ENCODE measurements at regions of chr1 and their contacts with region 1.

Region 1: DNA sequence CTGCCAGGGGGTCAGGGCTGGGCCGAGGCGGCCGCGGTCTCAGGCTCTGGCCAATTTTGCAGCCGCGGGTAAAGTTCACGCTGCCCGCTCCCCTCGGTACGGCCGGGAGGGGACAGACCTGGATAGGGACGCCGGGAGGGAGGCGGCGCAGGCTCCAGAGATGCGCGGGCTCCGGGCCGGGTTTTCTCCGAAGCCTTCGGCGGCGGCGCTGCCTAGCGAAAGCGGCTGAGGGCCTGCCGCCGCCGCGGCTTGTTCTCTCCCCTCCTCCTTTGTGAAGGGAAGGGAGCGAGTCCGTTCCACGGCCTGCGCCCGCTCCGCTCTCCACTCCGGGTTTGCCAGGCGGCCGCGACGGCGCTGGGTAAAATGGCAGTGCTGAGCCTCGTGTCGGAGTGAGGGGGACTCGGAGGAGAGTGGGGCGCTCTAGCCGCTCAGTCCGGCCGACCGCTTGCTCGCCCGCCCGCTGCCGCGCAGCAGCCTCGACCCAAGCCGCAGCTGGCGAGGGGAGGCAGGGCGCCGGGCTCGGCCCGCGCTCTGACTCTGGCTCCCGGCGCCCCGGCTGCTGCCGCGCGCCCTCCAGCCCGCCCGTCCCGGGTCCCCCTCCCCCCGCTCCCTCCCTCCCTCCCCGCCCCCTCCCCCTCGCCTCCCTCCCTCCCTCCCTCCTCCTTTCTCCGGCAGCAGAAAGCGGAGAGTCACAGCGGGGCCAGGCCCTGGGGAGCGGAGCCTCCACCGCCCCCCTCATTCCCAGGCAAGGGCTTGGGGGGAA is at the start of gene ARID1A:
- DNase-seq: peak; percentile 83 to 98 (median 88)
- ATAC-seq: peak; percentile 74
- H3K4me3 ChIP-seq: peak within 1 kb of the TSS; percentile 79
- H3K27ac ChIP-seq: peak within 1 kb of the TSS; percentile 92
- H3K4me1 ChIP-seq: peaks cover 43 to 47% of the 10 kb centered on the region in 2 experiments
- H3K27me3 ChIP-seq: no peaks in the 10 kb centered on the region
- CTCF ChIP-seq: peak in 1 of 3 experiments; percentile 14; a peak in 1 of 6 replicates
- EP300 ChIP-seq: peak; percentile 80
- POLR2A ChIP-seq: peak; percentile 90
- RAD21 ChIP-seq: peak; percentile 62 to 68
- polyA plus RNA-seq, gene ARID1A: 8.3 to 20.2 TPM

Region 2: GRCh38 chr1:26440259-26440658 is 255.3 kb before region 1 on chr1:
- CTCF ChIA-PET with region 1: no interaction called
- POLR2A ChIA-PET with region 1: no interaction called
- in situ Hi-C with region 1: no loop called
- intact Hi-C with region 1: no loop called
- DNase-seq: no peak
- ATAC-seq: no peak
- H3K4me3 ChIP-seq: no peak overlapping the region
- H3K27ac ChIP-seq: no peak overlapping the region
- H3K4me1 ChIP-seq: no peaks in the 10 kb centered on the region
- H3K27me3 ChIP-seq: no peaks in the 10 kb centered on the region
- CTCF ChIP-seq: no peak
- EP300 ChIP-seq: no peak
- POLR2A ChIP-seq: no peak
- RAD21 ChIP-seq: no peak

Region 3: DNA sequence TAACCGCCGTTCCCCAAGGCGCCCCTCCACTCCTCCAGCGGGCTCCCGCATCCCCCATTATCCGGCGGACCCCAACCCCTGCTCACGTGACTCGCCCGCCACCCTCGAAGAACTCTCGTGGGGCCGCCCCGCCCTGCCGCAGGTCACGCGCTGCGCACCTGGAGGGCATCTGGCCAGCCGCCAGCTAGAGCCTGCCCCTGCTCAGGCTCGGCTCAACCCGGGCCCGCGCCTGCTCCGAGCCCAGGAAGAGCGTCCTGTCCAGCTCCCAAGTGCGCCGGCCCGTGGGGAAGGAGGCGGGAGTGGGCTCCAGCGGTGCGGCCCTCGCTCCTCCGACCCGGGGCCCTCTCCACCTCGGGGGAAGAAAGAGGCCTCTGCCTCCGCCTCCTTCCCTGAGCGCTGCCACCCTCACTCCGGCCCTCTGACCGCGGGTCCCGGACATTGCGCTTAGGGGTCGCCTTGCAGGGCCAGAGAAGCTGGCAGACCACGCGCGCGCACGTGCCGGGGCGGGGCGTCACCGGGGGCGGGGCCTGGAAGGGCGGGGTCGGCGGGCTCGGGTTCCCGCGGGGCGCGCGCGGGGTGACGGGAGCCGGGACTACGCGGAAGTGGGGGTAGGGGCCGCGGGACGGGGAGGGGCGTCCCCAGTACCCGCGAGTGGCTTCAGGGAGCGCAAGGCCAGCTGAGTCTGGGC is 194.9 kb before region 1 on chr1:
- CTCF ChIA-PET with region 1: no interaction called
- POLR2A ChIA-PET with region 1: interaction called, 8 read pairs
- in situ Hi-C with region 1: no loop called
- intact Hi-C with region 1: loop called (anchors 10 kb)
- DNase-seq: peak; percentile 92 to 97 (median 96)
- ATAC-seq: peak; percentile 85
- H3K4me3 ChIP-seq: peak overlapping the region; percentile 55
- H3K27ac ChIP-seq: peak overlapping the region; percentile 83
- H3K4me1 ChIP-seq: peaks cover 13 to 29% of the 10 kb centered on the region in 2 experiments
- H3K27me3 ChIP-seq: no peaks in the 10 kb centered on the region
- CTCF ChIP-seq: no peak
- EP300 ChIP-seq: no peak; the same call in 1 of the 2 replicates
- POLR2A ChIP-seq: no peak
- RAD21 ChIP-seq: no peak

Region 4: DNA sequence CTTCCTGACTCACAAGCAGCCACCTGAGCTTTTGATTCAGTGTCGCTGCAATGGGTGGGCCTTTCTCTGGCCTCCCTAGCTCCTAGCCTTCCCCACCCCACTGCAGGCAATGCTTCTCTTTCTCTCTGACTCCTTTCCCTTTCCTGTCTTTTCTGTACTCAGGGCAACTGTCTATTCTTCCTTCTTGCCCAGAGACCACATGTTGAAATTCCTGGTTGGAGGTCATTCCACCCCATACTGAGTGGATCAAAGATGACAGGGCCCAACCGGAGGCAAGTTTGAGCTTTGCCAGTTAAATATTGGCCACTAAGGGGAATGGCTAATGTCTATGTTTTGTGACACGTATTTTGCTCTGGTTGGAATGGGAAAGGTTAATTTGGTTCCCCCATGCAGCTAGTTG is 64.9 kb before region 1 on chr1:
- CTCF ChIA-PET with region 1: no interaction called
- POLR2A ChIA-PET with region 1: interaction called, 32 read pairs
- in situ Hi-C with region 1: no loop called
- intact Hi-C with region 1: no loop called
- DNase-seq: no peak
- ATAC-seq: no peak; the same call in 1 of the 3 replicates
- H3K4me3 ChIP-seq: no peak overlapping the region
- H3K27ac ChIP-seq: no peak overlapping the region
- H3K4me1 ChIP-seq: peaks cover 6 to 7% of the 10 kb centered on the region in 2 experiments
- H3K27me3 ChIP-seq: no peaks in the 10 kb centered on the region
- CTCF ChIP-seq: no peak
- EP300 ChIP-seq: no peak
- POLR2A ChIP-seq: no peak
- RAD21 ChIP-seq: no peak

Region 5: DNA sequence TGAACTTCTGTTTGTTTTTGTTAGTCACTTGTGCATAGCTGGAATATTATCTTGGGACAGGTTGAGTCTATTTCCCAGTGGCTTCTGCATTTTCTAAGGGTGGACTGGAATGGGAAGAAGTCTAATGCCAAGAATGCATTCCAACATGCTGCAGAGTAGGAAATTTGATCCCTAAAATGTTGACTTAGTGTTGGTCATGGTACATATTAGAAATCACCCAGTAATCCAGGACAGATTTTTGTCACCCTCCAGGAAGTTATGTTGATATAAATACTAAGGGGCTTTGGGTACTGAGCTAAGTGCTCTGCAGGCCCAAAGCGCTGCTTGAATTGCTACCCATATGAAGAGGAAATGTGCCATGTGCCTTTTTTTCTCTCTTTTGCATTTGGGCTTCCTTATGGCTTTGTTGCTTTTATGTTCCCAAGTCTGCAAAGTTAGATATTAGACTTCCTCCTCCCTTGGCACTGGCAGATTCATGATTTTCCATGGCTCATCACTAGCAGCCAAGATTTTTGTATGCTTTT is 10.3 kb after region 1 on chr1:
- CTCF ChIA-PET with region 1: no interaction called
- POLR2A ChIA-PET with region 1: interaction called, 227 read pairs
- in situ Hi-C with region 1: no loop called
- intact Hi-C with region 1: no loop called
- DNase-seq: no peak
- ATAC-seq: no peak
- H3K4me3 ChIP-seq: no peak overlapping the region
- H3K27ac ChIP-seq: peak overlapping the region; percentile 40; the same call in 1 of the 3 replicates
- H3K4me1 ChIP-seq: peaks cover 19 to 52% of the 10 kb centered on the region in 2 experiments; a peak in 4 of 5 replicates
- H3K27me3 ChIP-seq: no peaks in the 10 kb centered on the region
- CTCF ChIP-seq: no peak
- EP300 ChIP-seq: no peak
- POLR2A ChIP-seq: no peak
- RAD21 ChIP-seq: no peak

Region 6: DNA sequence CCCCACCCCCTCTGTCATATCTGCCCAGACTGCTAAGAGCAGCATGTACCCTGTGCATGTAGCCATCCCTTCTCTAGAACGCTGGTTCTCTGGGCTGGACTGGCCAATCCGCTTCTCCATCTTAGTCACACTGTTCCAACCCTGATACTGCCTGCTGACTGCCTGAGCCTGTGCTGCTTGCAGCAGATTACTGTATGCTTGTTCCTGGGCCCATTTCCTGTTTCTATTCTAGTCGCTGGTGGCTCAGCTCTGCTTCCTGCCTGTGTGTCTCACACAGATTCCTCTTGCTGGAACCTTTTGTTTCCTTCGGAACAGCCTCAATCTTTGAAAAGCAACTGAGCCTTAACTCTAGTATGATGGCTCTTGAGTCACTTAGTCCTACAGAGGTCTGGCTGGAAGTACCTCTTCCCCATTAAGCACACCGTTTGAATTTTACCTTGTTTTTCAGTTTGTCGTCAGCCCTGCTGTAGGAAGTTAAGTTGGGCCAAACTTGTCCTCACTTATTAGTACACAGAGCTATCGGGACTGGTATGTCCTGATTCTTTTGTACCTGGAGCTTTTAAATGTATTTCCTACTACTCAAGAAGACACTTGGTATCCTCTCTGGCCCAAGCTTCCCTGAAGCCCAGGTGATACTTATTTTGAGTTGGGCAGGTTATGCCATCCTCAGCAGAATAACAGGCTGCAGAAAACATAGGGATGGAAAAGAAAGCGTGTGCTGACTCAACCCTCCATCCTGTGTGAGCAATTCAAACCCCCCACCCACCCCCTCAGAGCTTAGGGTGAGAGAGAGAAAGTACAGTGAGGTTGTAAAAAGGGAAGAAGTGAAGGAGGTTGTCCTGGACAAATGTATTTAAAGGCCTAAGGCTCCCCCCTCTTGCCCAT is 48.8 kb after region 1 on chr1:
- CTCF ChIA-PET with region 1: no interaction called
- POLR2A ChIA-PET with region 1: interaction called, 23 read pairs
- in situ Hi-C with region 1: no loop called
- intact Hi-C with region 1: no loop called
- DNase-seq: peak; percentile 59 to 97 (median 79)
- ATAC-seq: peak; percentile 99
- H3K4me3 ChIP-seq: no peak overlapping the region
- H3K27ac ChIP-seq: peak overlapping the region; percentile 82
- H3K4me1 ChIP-seq: peaks cover 13 to 27% of the 10 kb centered on the region in 2 experiments; a peak in 4 of 5 replicates
- H3K27me3 ChIP-seq: no peaks in the 10 kb centered on the region
- CTCF ChIP-seq: no peak; a peak in 1 of 6 replicates
- EP300 ChIP-seq: peak; percentile 86
- POLR2A ChIP-seq: no peak
- RAD21 ChIP-seq: peak; percentile 38 to 52

Region 7: GRCh38 chr1:26864610-26865527 is 169.3 kb after region 1 on chr1:
- CTCF ChIA-PET with region 1: no interaction called
- POLR2A ChIA-PET with region 1: interaction called, 4 read pairs
- in situ Hi-C with region 1: no loop called
- intact Hi-C with region 1: loop called (anchors 10 kb)
- DNase-seq: peak; percentile 99
- ATAC-seq: peak; percentile 96
- H3K4me3 ChIP-seq: peak overlapping the region; percentile 55
- H3K27ac ChIP-seq: peak overlapping the region; percentile 90
- H3K4me1 ChIP-seq: peaks cover 21 to 36% of the 10 kb centered on the region in 2 experiments
- H3K27me3 ChIP-seq: no peaks in the 10 kb centered on the region
- CTCF ChIP-seq: peak in 1 of 3 experiments; percentile 15; a peak in 2 of 6 replicates
- EP300 ChIP-seq: no peak
- POLR2A ChIP-seq: peak; percentile 97
- RAD21 ChIP-seq: no peak

Region 8: DNA sequence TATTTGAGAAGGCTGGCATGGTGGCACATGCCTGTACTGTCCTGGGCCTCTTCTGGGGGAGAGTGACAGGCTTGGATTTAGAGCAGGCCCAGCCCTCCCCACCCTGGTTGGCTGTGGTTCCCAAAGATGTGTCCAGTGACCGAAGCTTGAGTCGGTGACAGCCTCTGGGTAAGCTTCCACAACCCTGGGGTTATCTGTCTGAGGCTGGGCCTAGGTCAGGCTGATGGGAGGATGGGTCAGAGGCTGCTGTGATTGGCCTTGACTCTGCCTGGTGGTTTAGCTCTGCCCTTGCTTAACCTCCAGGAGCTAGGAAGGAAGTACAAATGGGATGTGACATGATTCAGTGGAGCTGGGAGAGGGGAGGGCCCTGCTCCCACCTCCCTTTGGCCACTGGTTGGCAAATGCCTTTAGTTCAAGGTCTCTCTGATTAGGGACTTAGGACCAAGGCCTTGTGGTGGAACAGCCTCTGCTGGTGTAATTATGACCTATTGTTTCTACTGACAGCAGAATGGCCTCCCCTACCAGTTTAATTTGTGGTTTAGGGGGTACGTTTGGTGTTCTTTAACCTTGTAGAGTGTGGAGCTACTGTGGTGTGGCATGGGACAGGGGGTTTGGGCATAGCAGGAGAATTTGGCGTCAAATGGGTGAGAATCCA is 242.6 kb after region 1 on chr1:
- CTCF ChIA-PET with region 1: no interaction called
- POLR2A ChIA-PET with region 1: no interaction called
- in situ Hi-C with region 1: no loop called
- intact Hi-C with region 1: no loop called
- DNase-seq: peak in 1 of 4 experiments; percentile 48
- ATAC-seq: peak; percentile 71
- H3K4me3 ChIP-seq: no peak overlapping the region
- H3K27ac ChIP-seq: no peak overlapping the region
- H3K4me1 ChIP-seq: no peaks in the 10 kb centered on the region; a peak in 1 of 5 replicates
- H3K27me3 ChIP-seq: no peaks in the 10 kb centered on the region
- CTCF ChIP-seq: no peak
- EP300 ChIP-seq: no peak
- POLR2A ChIP-seq: no peak
- RAD21 ChIP-seq: no peak

Region 9: DNA sequence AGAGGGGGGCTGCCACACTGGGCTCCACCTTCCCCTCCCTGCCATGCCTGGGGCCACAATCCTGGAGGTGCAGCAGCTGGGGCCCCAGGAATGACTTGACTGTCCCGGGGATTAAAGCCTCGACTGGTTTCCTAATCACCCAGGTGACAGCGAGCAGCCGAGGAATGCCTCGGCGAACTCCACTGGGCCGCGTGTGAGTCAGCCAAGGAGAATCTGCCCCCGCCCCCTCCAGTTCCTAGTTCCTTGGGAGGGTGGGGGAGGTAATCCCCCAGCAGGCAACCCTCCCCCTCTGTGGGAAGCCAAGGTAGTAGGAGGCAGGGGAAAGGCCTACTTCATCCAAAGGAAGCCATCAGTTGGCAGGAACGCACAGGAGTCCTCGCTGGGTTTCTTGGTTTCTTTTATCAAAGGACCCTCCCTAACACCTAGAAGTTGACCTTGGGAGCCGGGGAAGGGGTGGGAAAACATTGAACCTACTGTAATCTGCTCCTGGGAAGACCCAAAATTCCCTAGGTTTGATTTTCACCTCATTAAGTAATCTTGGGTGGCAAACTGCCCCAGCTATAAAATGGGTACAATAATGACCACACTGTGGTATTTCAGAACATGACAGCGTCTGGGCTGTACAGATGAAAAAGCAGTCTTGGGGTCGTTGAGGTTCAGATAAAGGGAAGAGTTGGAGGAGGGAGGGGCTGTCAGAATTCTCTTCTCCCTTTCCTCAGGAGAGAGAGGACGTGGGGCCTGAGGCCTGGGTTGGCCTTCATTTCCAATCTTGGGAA is 315.6 kb after region 1 on chr1:
- CTCF ChIA-PET with region 1: no interaction called
- POLR2A ChIA-PET with region 1: no interaction called
- in situ Hi-C with region 1: no loop called
- intact Hi-C with region 1: no loop called
- DNase-seq: peak; percentile 80 to 88 (median 84)
- ATAC-seq: peak; percentile 7; the same call in 1 of the 3 replicates
- H3K4me3 ChIP-seq: no peak overlapping the region
- H3K27ac ChIP-seq: no peak overlapping the region
- H3K4me1 ChIP-seq: peaks cover 31 to 48% of the 10 kb centered on the region in 2 experiments; a peak in 4 of 5 replicates
- H3K27me3 ChIP-seq: no peaks in the 10 kb centered on the region
- CTCF ChIP-seq: no peak
- EP300 ChIP-seq: no peak
- POLR2A ChIP-seq: no peak
- RAD21 ChIP-seq: no peak

Measured in K562 (cell line).